Activated naive CD4-positive, alpha-beta T cell treated with anti-CD3 and anti-CD28 coated beads, Interleukin-2, amount 10 ng/mL, durations not matched to agents 7 days and 5 days (primary cell): ENCODE measurements at regions of chr11 and their contacts with region 1.

Region 1: GRCh38 chr11:269146-269890 is 8.9 kb upstream of the NLRP6 start:
- DNase-seq: peak; percentile 73
- H3K4me3 Mint-ChIP-seq: peak overlapping the region; percentile 79
- H3K27ac Mint-ChIP-seq: peak overlapping the region; percentile 99
- H3K4me1 Mint-ChIP-seq: peaks cover 43% of the 10 kb centered on the region
- H3K27me3 Mint-ChIP-seq: peaks cover 29% of the 10 kb centered on the region

Region 2: DNA sequence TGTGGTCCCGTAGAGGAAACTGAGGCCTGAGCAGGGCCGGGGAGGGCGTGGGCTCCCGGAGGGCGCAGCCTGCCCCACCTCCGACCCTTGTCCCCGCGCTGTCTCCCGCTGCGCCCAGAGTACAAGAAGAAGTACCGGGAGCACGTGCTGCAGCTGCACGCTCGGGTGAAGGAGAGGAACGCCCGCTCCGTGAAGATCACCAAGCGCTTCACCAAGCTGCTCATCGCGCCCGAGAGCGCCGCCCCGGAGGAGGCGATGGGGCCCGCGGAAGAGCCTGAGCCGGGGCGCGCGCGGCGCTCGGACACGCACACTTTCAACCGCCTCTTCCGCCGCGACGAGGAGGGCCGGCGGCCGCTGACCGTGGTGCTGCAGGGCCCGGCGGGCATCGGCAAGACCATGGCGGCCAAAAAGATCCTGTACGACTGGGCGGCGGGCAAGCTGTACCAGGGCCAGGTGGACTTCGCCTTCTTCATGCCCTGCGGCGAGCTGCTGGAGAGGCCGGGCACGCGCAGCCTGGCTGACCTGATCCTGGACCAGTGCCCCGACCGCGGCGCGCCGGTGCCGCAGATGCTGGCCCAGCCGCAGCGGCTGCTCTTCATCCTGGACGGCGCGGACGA is 10.8 kb after region 1 on chr11:
- CTCF ChIA-PET with region 1: interaction called, 16 read pairs
- DNase-seq: peak; percentile 72
- H3K4me3 Mint-ChIP-seq: peak overlapping the region; percentile 85
- H3K27ac Mint-ChIP-seq: peak overlapping the region; percentile 91
- H3K4me1 Mint-ChIP-seq: peaks cover 63% of the 10 kb centered on the region
- H3K27me3 Mint-ChIP-seq: peaks cover 82% of the 10 kb centered on the region